HepG2 (cell line): ENCODE measurements at regions of chr3 and their contacts with region 1.

Region 1: GRCh38 chr3:65342084-65342683 is 654.4 kb upstream of the ADAMTS9 start:
- DNase-seq: peak; percentile 35
- ATAC-seq: peak; percentile 95
- H3K4me3 ChIP-seq: no peak overlapping the region
- H3K27ac ChIP-seq: no peak overlapping the region
- H3K4me1 ChIP-seq: peaks cover 13% of the 10 kb centered on the region
- H3K27me3 ChIP-seq: no peaks in the 10 kb centered on the region; a peak in 1 of 5 replicates
- CTCF ChIP-seq: peak; percentile 85
- EP300 ChIP-seq: no peak
- POLR2A ChIP-seq: no peak
- RAD21 ChIP-seq: peak; percentile 53; the same call in 1 of the 2 replicates

Region 2: DNA sequence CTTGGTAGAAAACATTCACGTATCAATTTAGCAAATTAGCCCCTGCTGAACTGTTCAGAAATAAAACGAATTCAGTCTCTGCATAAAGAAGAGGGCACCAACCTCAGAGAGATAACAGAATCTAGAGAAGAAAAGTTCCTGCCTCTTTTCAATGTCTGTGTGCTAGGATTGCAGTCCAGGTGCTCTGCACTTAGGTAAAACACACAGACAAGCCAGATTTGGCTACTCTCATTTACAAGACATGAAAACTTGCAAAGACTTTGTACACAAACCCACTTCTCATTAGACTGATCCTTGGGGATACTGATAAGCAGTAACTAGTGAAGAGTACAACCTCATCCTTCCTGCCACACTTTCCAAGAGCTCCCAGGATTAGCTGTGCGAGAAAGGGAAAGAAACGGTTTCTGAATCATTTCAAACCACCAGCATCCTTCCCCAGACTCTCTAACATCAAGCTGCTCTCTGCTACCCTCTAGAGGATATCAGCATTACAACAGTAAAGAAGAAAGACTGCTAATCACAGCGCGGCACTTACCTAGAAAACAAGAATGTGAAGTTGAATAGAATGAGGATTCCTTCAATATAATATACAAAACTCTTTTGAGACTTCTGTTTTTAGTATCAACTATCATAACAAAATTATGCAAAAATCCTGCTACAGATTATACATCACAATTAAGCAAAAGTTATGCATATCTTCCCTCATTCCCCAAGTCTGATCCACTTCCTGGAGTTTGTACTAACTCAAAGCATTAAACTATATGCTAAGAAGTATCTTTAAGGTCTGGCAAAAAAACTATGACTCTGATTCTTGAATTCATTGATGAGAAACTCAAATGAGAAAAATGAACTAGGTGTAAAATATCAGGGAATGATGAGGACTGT is 390.1 kb after region 1 on chr3:
- CTCF ChIA-PET with region 1: interaction called, 3 read pairs
- POLR2A ChIA-PET with region 1: no interaction called
- in situ Hi-C with region 1: loop called (anchors 10 kb)
- intact Hi-C with region 1: no loop called
- DNase-seq: peak; percentile 54
- ATAC-seq: peak; percentile 65
- H3K4me3 ChIP-seq: no peak overlapping the region
- H3K27ac ChIP-seq: no peak overlapping the region
- H3K4me1 ChIP-seq: peaks cover 38% of the 10 kb centered on the region
- H3K27me3 ChIP-seq: no peaks in the 10 kb centered on the region
- CTCF ChIP-seq: peak; percentile 79
- EP300 ChIP-seq: no peak
- POLR2A ChIP-seq: no peak
- RAD21 ChIP-seq: 0 out of 2 replicates have a peak, but pooled peaks have one; percentile 31

Region 3: GRCh38 chr3:65751123-65751700 is 409.0 kb after region 1 on chr3:
- CTCF ChIA-PET with region 1: no interaction called
- POLR2A ChIA-PET with region 1: no interaction called
- in situ Hi-C with region 1: no loop called
- intact Hi-C with region 1: loop called (anchors 10 kb)
- DNase-seq: peak; percentile 47
- ATAC-seq: peak; percentile 94
- H3K4me3 ChIP-seq: no peak overlapping the region
- H3K27ac ChIP-seq: no peak overlapping the region
- H3K4me1 ChIP-seq: no peaks in the 10 kb centered on the region
- H3K27me3 ChIP-seq: no peaks in the 10 kb centered on the region
- CTCF ChIP-seq: peak; percentile 77
- EP300 ChIP-seq: no peak
- POLR2A ChIP-seq: no peak
- RAD21 ChIP-seq: 0 out of 2 replicates have a peak, but pooled peaks have one; percentile 10